K562 (cell line): ENCODE measurements at regions of chrX and their contacts with region 1.

Region 1: GRCh38 chrX:78555401-78555980 is 103.6 kb downstream of the RTL3 start:
- DNase-seq: peak in 1 of 4 experiments; percentile 0
- ATAC-seq: no peak
- H3K4me3 ChIP-seq: no peak overlapping the region
- H3K27ac ChIP-seq: no peak overlapping the region
- H3K4me1 ChIP-seq: no peaks in the 10 kb centered on the region
- H3K27me3 ChIP-seq: no peaks in the 10 kb centered on the region
- CTCF ChIP-seq: peak in 1 of 3 experiments; percentile 25; a peak in 2 of 6 replicates
- EP300 ChIP-seq: no peak
- POLR2A ChIP-seq: no peak
- RAD21 ChIP-seq: peak in 1 of 2 experiments; percentile 29; a peak in 2 of 4 replicates

Region 2: GRCh38 chrX:78213331-78213730 is 342.2 kb before region 1 on chrX:
- CTCF ChIA-PET with region 1: no interaction called
- POLR2A ChIA-PET with region 1: no interaction called
- in situ Hi-C with region 1: no loop called
- intact Hi-C with region 1: no loop called
- DNase-seq: peak in 1 of 4 experiments; percentile 1
- ATAC-seq: no peak
- H3K4me3 ChIP-seq: no peak overlapping the region
- H3K27ac ChIP-seq: no peak overlapping the region
- H3K4me1 ChIP-seq: no peaks in the 10 kb centered on the region
- H3K27me3 ChIP-seq: no peaks in the 10 kb centered on the region
- CTCF ChIP-seq: no peak
- EP300 ChIP-seq: no peak
- POLR2A ChIP-seq: no peak
- RAD21 ChIP-seq: no peak

Region 3: GRCh38 chrX:78931814-78932213 is 376.3 kb after region 1 on chrX:
- CTCF ChIA-PET with region 1: no interaction called
- POLR2A ChIA-PET with region 1: no interaction called
- in situ Hi-C with region 1: no loop called
- intact Hi-C with region 1: no loop called
- DNase-seq: no peak
- ATAC-seq: no peak
- H3K4me3 ChIP-seq: no peak overlapping the region
- H3K27ac ChIP-seq: no peak overlapping the region
- H3K4me1 ChIP-seq: no peaks in the 10 kb centered on the region
- H3K27me3 ChIP-seq: no peaks in the 10 kb centered on the region
- CTCF ChIP-seq: no peak
- EP300 ChIP-seq: no peak
- POLR2A ChIP-seq: no peak
- RAD21 ChIP-seq: no peak

Region 4: DNA sequence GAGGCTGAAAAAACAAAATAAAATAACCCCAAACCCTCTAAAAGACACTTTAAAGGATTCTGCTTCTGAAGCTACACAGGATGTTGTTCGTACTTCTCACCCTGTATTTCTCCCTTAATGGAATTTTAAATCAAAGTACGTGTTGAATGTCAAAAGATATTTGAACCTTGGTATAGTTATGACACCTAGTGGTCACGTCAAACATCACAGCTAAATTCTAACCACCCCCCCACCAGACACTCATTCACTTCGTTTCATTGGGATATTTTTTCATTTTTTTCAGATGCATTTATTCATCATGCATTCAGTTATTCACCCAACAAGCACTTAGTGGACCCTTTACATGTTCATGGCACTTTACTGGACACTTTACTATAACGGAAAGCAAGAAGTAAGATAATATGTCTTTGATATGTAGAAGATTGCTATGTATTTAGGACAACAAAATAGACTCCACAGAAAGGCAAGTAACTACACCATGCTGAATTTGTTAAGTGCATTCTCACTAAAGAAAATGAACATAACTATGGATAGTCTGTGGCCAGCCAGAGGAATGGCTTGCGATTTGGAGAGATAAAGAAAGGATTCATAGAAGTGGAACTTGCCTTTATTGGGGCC is 526.5 kb after region 1 on chrX:
- CTCF ChIA-PET with region 1: no interaction called
- POLR2A ChIA-PET with region 1: no interaction called
- in situ Hi-C with region 1: no loop called
- intact Hi-C with region 1: loop called (anchors 5 kb)
- DNase-seq: peak; percentile 10 to 21 (median 16)
- ATAC-seq: no peak
- H3K4me3 ChIP-seq: no peak overlapping the region
- H3K27ac ChIP-seq: no peak overlapping the region
- H3K4me1 ChIP-seq: no peaks in the 10 kb centered on the region
- H3K27me3 ChIP-seq: no peaks in the 10 kb centered on the region
- CTCF ChIP-seq: peak in 2 of 3 experiments; percentile 48 to 52; a peak in 4 of 6 replicates
- EP300 ChIP-seq: no peak
- POLR2A ChIP-seq: no peak
- RAD21 ChIP-seq: peak; percentile 25 to 58; a peak in 3 of 4 replicates